Activated CD4-positive, alpha-beta memory T cell treated with anti-CD3 and anti-CD28 coated beads for 36 hours (primary cell): ENCODE measurements at regions of chr1 and their contacts with region 1.

Region 1: DNA sequence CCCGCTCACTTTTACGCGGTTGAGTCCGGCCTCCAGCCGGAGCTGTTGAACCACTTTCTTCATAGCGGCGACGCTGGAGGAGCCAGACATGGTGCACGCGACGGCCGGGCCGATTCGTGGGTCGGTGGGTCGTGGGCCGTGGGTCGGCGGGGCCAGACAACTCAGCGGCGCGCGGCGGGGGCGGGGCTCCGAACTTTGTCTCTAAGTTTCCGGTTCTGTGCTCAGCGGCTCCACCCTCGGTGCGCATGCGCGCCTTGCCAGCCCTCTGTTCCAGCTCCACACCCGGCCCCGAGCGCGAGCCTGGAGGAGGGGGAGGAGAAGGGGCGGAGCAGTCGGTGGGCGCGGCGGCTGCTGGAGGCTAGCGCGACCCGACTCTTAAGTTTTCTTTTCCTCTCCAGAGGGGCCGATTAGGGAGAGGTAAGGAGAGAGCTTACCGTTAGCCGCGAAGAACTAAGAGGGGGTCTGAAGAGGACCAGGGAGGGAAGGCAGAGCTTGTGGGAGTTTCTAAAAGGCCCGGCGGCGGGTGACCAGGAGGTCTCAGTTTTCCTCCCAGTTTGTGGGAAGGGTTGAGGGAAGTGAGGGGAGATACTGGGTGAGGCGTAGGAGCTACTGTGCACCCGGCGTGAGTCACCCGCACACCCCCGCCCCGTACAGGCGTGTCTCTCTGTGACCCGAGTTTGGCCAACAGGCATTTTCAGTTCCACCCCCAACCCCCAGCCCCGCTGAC is at the starts of genes GNG5 and SPATA1:
- DNase-seq: peak; percentile 98
- H3K4me3 Mint-ChIP-seq: peak within 1 kb of the TSS; percentile 95
- H3K27ac Mint-ChIP-seq: peak within 1 kb of the TSS; percentile 97
- H3K4me1 Mint-ChIP-seq: peaks cover 35% of the 10 kb centered on the region
- H3K27me3 Mint-ChIP-seq: no peaks in the 10 kb centered on the region
- total RNA-seq, gene GNG5: 139 to 143 TPM
- total RNA-seq, gene SPATA1: 3.2 to 3.8 TPM

Region 2: DNA sequence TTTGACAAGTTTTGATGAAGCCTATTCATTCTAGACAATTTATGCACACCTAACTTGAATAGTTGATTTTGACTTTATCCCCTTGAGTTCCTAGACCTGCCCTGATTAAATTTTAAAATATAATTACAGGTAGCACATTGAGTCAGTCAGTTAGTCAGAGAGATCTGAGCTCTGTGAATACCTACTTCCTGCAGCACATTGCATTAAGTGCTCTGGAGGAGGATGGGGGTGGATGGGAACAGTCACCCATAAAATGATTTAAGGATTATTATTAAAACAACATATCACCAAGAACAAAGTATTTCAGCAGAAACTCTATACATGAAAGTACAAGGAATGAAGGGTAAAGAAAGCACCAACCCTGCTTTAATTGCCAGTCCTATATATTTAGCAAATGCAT is 38.9 kb before region 1 on chr1:
- CTCF ChIA-PET with region 1: no interaction called
- POLR2A ChIA-PET with region 1: no interaction called
- intact Hi-C with region 1: no loop called
- DNase-seq: no peak
- H3K4me3 Mint-ChIP-seq: no peak overlapping the region
- H3K27ac Mint-ChIP-seq: no peak overlapping the region
- H3K4me1 Mint-ChIP-seq: no peaks in the 10 kb centered on the region
- H3K27me3 Mint-ChIP-seq: peaks cover 29% of the 10 kb centered on the region

Region 3: DNA sequence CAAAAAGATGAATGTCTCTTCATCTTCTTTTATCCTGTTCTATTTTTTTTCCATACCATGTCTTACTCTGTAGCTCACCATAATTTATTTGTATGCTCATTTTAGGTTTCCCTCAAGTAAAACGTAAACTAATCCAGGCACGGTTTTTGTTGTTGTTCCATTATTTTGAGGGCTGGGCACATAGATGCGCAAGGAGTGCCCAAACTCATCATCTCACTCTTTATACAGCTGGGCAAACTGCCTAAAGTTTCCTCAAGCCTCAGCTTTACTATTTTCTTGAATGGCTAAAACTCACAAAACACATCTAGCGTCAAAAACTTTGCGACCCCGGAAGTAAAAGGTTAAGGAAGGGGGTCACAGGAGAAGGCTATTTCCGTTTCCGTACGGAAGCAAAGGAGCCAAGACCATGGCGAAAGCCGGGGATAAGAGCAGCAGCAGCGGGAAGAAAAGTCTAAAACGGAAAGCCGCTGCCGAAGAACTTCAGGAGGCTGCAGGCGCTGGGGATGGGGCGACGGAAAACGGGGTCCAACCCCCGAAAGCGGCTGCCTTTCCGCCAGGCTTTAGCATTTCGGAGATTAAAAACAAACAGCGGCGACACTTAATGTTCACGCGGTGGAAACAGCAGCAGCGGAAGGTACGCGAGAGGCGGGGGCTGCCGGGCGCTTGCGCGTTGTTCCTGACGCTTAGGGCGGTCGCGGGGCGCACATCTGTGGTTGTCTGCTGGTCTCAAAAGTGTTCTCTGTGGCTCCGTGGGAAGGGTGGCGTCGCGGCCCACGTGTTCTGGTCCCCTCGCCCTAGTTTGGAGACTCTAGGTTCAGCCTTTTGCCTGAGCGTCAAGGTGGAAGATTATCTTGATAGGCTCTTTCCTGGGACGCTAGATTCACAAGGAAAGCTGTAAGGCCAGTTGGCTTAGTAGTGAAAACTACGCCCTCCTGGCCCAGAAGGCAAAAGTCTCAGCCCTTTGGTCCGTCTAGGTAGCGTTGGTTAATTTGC is 27.0 kb before region 1 on chr1 and contains the start of gene RPF1:
- CTCF ChIA-PET with region 1: interaction called, 8 read pairs
- POLR2A ChIA-PET with region 1: interaction called, 17 read pairs
- intact Hi-C with region 1: loop called (anchors 1 kb)
- DNase-seq: peak; percentile 82
- H3K4me3 Mint-ChIP-seq: peak within 1 kb of the TSS; percentile 96
- H3K27ac Mint-ChIP-seq: peak within 1 kb of the TSS; percentile 96
- H3K4me1 Mint-ChIP-seq: peaks cover 34% of the 10 kb centered on the region
- H3K27me3 Mint-ChIP-seq: peaks cover 16% of the 10 kb centered on the region
- total RNA-seq, gene RPF1: 55.0 to 56.5 TPM

Region 4: GRCh38 chr1:84573967-84574842 is 68.0 kb after region 1 on chr1 and contains the start of gene CTBS:
- CTCF ChIA-PET with region 1: interaction called, 6 read pairs
- POLR2A ChIA-PET with region 1: interaction called, 83 read pairs
- intact Hi-C with region 1: loop called (anchors 1 kb)
- DNase-seq: peak; percentile 90
- H3K4me3 Mint-ChIP-seq: peak within 1 kb of the TSS; percentile 98
- H3K27ac Mint-ChIP-seq: peak within 1 kb of the TSS; percentile 100
- H3K4me1 Mint-ChIP-seq: peaks cover 35% of the 10 kb centered on the region
- H3K27me3 Mint-ChIP-seq: peaks cover 1% of the 10 kb centered on the region
- total RNA-seq, gene CTBS: 22.9 to 24.2 TPM

Region 5: DNA sequence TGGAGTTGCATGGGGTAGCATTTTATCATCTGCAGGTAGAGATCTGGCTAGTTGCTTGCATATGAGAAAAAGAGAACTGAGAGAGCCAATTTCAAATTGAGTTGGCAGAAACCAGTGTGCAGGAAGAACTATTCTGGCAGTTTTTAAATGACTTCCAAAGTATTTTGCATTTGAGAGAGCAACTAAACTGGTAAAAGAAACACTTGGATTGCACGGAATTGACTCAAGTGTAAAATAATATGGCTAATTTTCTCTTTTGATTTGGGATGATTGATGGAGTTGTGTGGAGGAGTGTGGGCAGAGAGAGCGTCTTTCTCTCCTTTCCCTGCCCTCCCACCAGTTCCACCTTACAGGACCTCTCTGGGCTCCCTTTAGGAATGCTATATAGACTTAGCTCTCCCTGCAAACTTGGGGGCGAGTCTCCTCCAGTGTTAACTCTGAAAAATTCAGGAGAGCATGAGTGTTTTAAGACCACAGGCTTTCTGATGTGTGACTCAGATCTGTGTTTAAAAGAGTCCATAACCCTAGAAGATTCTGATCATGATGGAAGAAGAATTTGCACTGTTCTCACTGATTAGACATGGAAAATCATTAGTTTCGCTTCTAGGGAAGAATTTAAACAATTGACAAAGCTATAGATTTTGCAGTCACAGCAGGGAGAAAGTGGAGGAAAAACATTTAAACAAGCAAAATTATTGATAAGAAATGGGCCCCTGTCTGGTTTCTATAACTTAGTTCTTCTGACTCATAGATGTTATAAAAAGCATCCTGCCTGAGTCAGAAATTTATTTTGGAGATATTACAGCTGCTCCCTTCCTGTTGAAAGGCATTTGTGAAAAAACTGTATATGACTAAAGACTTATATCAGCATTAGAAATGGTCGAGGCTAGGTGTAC is 92.9 kb after region 1 on chr1:
- CTCF ChIA-PET with region 1: interaction called, 4 read pairs
- POLR2A ChIA-PET with region 1: no interaction called
- intact Hi-C with region 1: loop called (anchors 1 kb)
- DNase-seq: no peak
- H3K4me3 Mint-ChIP-seq: peak overlapping the region; percentile 27
- H3K27ac Mint-ChIP-seq: peak overlapping the region; percentile 76
- H3K4me1 Mint-ChIP-seq: peaks cover 29% of the 10 kb centered on the region
- H3K27me3 Mint-ChIP-seq: peaks cover 2% of the 10 kb centered on the region

Region 6: GRCh38 chr1:84690397-84691121 is 184.4 kb after region 1 on chr1 and contains the start of gene SSX2IP:
- CTCF ChIA-PET with region 1: no interaction called
- POLR2A ChIA-PET with region 1: interaction called, 3 read pairs
- intact Hi-C with region 1: loop called (anchors 1 kb)
- DNase-seq: peak; percentile 99
- H3K4me3 Mint-ChIP-seq: peak within 1 kb of the TSS; percentile 94
- H3K27ac Mint-ChIP-seq: peak within 1 kb of the TSS; percentile 80
- H3K4me1 Mint-ChIP-seq: peaks cover 53% of the 10 kb centered on the region
- H3K27me3 Mint-ChIP-seq: peaks cover 2% of the 10 kb centered on the region
- total RNA-seq, gene SSX2IP: 10.9 to 11.6 TPM

Region 7: GRCh38 chr1:84853741-84854721 is 347.9 kb after region 1 on chr1:
- CTCF ChIA-PET with region 1: no interaction called
- POLR2A ChIA-PET with region 1: no interaction called
- intact Hi-C with region 1: loop called (anchors 10 kb)
- DNase-seq: peak; percentile 54
- H3K4me3 Mint-ChIP-seq: peak overlapping the region; percentile 4
- H3K27ac Mint-ChIP-seq: peak overlapping the region; percentile 32
- H3K4me1 Mint-ChIP-seq: peaks cover 29% of the 10 kb centered on the region
- H3K27me3 Mint-ChIP-seq: no peaks in the 10 kb centered on the region

Region 8: GRCh38 chr1:85200870-85201339 is 694.7 kb after region 1 on chr1 and contains the start of gene SYDE2:
- CTCF ChIA-PET with region 1: no interaction called
- POLR2A ChIA-PET with region 1: no interaction called
- intact Hi-C with region 1: loop called (anchors 2 kb)
- DNase-seq: peak; percentile 76
- H3K4me3 Mint-ChIP-seq: peak within 1 kb of the TSS; percentile 97
- H3K27ac Mint-ChIP-seq: peak within 1 kb of the TSS; percentile 89
- H3K4me1 Mint-ChIP-seq: peaks cover 26% of the 10 kb centered on the region
- H3K27me3 Mint-ChIP-seq: peaks cover 5% of the 10 kb centered on the region
- total RNA-seq, gene SYDE2: 2.7 to 2.8 TPM